OCI-LY7 (cell line): ENCODE measurements at regions of chr1 and their contacts with region 1.

Region 1: DNA sequence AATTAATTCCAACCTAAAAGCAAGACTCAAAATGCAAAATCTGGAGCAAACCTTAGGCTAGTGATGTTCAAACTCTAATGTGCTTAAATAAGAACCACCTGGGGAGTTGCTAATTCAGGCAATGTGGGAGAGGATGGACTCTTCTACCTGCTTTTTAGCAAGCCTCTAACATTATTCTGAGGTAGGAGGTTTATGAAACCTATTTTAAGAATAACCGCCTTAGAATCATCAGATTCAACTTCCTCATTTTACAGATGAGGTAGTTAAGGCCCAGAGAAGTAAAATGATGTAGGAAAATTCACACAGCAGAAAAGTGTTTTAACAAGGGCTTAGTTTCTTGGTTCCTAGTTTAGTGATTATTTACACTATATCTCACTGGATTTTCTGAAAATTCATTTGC is 8.6 kb upstream of the NTNG1 start:
- DNase-seq: peak; percentile 84
- H3K4me3 ChIP-seq: peak overlapping the region; percentile 26
- H3K27ac ChIP-seq: peak overlapping the region; percentile 92
- H3K4me1 ChIP-seq: peaks cover 43% of the 10 kb centered on the region
- CTCF ChIP-seq: no peak

Region 2: DNA sequence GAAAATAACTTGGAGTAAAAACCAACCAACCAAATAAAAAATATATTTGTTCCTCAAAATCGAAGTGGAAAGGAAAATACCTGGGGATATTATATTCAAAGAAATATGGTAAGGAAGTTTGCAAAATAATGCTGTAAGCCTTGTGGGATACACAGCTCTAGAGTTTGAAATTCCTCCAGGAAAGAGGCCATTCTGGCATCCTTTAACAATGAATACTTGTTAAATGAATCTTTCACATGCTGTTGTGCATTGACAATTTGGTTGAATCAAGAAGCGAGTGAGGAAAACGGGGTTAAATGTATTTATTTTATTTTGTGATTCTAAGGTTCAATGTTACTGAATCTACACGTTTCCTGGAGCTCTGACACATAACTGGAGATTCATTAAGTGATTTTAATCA is 21.9 kb before region 1 on chr1:
- CTCF ChIA-PET with region 1: no interaction called
- POLR2A ChIA-PET with region 1: interaction called, 11 read pairs
- intact Hi-C with region 1: no loop called
- DNase-seq: no peak
- H3K4me3 ChIP-seq: no peak overlapping the region
- H3K27ac ChIP-seq: no peak overlapping the region
- H3K4me1 ChIP-seq: no peaks in the 10 kb centered on the region
- CTCF ChIP-seq: no peak